Left lung (tissue), 14 donors: ENCODE measurements at regions of chr1 and their contacts with region 1.

Region 1: DNA sequence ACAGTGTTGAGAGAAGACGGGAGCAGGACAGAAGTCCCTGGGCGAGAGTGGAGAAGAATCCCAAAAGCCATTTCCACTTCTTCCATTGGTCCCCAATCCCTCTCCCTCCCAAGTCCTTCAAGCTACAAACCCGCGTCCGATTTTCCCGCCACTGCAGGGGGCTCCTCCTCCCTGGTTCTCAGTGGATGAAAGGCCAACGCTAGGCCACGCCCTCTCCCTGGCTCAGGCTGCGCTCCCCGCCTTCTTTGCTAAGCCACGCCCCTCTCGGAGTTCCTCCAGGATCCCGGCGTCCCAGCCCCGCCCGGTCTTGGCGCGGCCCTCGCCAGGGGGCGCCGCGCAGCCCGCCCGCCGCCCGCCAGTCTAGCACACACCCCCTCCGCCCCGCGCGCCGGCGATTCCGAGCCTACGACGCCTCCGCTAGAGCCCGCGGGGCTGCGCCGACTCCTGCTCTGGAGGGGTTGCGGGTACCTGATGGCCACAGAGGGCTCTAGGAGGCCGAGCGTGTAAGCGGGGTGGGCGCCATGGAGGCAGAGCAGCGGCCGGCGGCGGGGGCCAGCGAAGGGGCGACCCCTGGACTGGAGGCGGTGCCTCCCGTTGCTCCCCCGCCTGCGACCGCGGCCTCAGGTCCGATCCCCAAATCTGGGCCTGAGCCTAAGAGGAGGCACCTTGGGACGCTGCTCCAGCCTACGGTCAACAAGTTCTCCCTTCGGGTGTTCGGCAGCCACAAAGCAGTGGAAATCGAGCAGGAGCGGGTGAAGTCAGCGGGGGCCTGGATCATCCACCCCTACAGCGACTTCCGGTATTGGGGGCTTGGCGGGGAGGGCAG is at the start of gene HCN3:
- DNase-seq: peak; percentile 97 to 99 (median 98)
- ATAC-seq: peak; percentile 89
- H3K4me3 ChIP-seq: peak within 1 kb of the TSS; percentile 73 to 78
- H3K27ac ChIP-seq: peak within 1 kb of the TSS in 1 of 2 donors; percentile 57
- H3K4me1 ChIP-seq: peaks cover 9 to 36% of the 10 kb centered on the region in 2 donors
- H3K27me3 ChIP-seq: peaks cover 0 to 13% of the 10 kb centered on the region in 2 donors
- CTCF ChIP-seq: peak; percentile 41 to 80
- polyA plus RNA-seq, gene HCN3: 8.1 to 11.7 (median 8.6) TPM

Region 2: GRCh38 chr1:155323798-155324610 is 46.7 kb after region 1 on chr1:
- intact Hi-C with region 1: loop called in 1 of 2 experiments (anchors 5 kb)
- DNase-seq: peak; percentile 91 to 99 (median 97)
- ATAC-seq: peak; percentile 88
- H3K4me3 ChIP-seq: peak overlapping the region; percentile 68 to 94
- H3K27ac ChIP-seq: peak overlapping the region; percentile 92 to 97
- H3K4me1 ChIP-seq: peaks cover 11 to 55% of the 10 kb centered on the region in 2 donors
- H3K27me3 ChIP-seq: no peaks in the 10 kb centered on the region
- CTCF ChIP-seq: no peak

Region 3: DNA sequence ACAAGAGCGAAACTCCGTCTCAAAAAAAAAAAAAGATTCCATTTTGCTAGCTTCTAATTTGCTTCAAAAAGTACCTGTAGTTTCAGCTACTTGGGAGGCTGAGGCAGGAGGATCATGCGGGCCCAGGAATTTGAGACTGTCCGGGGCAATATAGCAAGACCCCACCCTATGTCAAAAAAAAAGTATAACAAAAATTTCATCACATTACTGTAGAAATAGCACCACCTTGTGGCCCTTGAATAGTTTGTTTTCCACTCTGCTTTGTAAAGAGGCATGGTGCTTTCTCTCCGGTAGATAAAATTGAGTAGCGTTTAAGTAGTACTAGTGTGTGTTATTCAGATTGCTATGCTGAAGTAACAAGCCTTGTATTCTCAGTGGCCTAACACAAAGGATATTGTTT is 314.5 kb after region 1 on chr1:
- intact Hi-C with region 1: loop called in 1 of 2 experiments (anchors 10 kb)
- DNase-seq: peak in 2 of 4 donors; percentile 26 to 63
- ATAC-seq: peak; percentile 87
- H3K4me3 ChIP-seq: no peak overlapping the region
- H3K27ac ChIP-seq: no peak overlapping the region
- H3K4me1 ChIP-seq: no peaks in the 10 kb centered on the region
- H3K27me3 ChIP-seq: no peaks in the 10 kb centered on the region
- CTCF ChIP-seq: peak; percentile 49 to 52